CD14-positive monocyte (primary cell): ENCODE measurements at regions of chr18 and their contacts with region 1.

Region 1: GRCh38 chr18:23452728-23453679 is at the start of gene RIOK3:
- DNase-seq: peak; percentile 98 to 99 (median 98)
- H3K4me3 ChIP-seq: peak within 1 kb of the TSS; percentile 80 to 99 (median 92)
- H3K4me3 Mint-ChIP-seq: peak within 1 kb of the TSS; percentile 99
- H3K27ac ChIP-seq: peak within 1 kb of the TSS; percentile 80 to 98
- H3K27ac Mint-ChIP-seq: peak within 1 kb of the TSS; percentile 93 to 99 (median 99)
- H3K4me1 ChIP-seq: peaks cover 29 to 60% of the 10 kb centered on the region in 2 donors
- H3K4me1 Mint-ChIP-seq: peaks cover 53% of the 10 kb centered on the region
- H3K27me3 ChIP-seq: no peaks in the 10 kb centered on the region
- H3K27me3 Mint-ChIP-seq: no peaks in the 10 kb centered on the region
- CTCF ChIP-seq: no peak
- polyA plus RNA-seq, gene RIOK3: 50.9 to 79.7 (median 62.2) TPM

Region 2: GRCh38 chr18:23503038-23503962 is 50.3 kb after region 1 on chr18 and contains the start of gene RMC1:
- intact Hi-C with region 1: loop called in 1 of 2 experiments (anchors 5 kb)
- DNase-seq: peak; percentile 94 to 97 (median 96)
- H3K4me3 ChIP-seq: peak within 1 kb of the TSS; percentile 71 to 95 (median 77)
- H3K4me3 Mint-ChIP-seq: peak within 1 kb of the TSS; percentile 92 to 97
- H3K27ac ChIP-seq: peak within 1 kb of the TSS; percentile 78 to 94
- H3K27ac Mint-ChIP-seq: peak within 1 kb of the TSS; percentile 91 to 97 (median 94)
- H3K4me1 ChIP-seq: peaks cover 45 to 56% of the 10 kb centered on the region in 2 donors
- H3K4me1 Mint-ChIP-seq: peaks cover 50% of the 10 kb centered on the region
- H3K27me3 ChIP-seq: no peaks in the 10 kb centered on the region
- H3K27me3 Mint-ChIP-seq: peaks cover 0 to 2% (median 1%) of the 10 kb centered on the region in 3 donors
- CTCF ChIP-seq: no peak
- polyA plus RNA-seq, gene RMC1: 21.9 to 70.8 (median 30.1) TPM

Region 3: DNA sequence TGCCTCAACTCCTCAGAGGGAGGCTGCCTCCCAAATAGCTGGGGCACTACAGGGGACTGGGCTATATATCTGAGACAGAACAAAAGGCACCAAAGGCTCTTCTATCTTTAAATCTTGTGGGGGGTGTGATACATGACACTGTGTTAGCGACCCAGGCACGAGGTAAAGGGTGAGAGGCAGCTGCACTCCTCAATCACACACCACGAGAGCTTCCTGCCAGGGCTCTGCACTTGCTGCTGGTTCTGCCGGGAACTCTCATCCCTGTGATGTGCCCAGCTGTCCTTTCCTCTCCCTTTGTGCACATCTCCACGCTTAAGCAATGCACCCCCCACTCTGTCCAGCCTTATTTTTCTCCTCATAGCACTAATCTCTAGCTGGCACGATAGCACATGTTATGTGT is 100.9 kb after region 1 on chr18:
- intact Hi-C with region 1: no loop called
- DNase-seq: no peak
- H3K4me3 ChIP-seq: no peak overlapping the region
- H3K4me3 Mint-ChIP-seq: no peak overlapping the region
- H3K27ac ChIP-seq: no peak overlapping the region
- H3K27ac Mint-ChIP-seq: peak overlapping the region in 1 of 7 donors; percentile 14
- H3K4me1 ChIP-seq: no peaks in the 10 kb centered on the region
- H3K4me1 Mint-ChIP-seq: no peaks in the 10 kb centered on the region
- H3K27me3 ChIP-seq: no peaks in the 10 kb centered on the region
- H3K27me3 Mint-ChIP-seq: no peaks in the 10 kb centered on the region
- CTCF ChIP-seq: no peak